Transverse colon (tissue), 4 donors: ENCODE measurements at regions of chr2 and their contacts with region 1.

Region 1: DNA sequence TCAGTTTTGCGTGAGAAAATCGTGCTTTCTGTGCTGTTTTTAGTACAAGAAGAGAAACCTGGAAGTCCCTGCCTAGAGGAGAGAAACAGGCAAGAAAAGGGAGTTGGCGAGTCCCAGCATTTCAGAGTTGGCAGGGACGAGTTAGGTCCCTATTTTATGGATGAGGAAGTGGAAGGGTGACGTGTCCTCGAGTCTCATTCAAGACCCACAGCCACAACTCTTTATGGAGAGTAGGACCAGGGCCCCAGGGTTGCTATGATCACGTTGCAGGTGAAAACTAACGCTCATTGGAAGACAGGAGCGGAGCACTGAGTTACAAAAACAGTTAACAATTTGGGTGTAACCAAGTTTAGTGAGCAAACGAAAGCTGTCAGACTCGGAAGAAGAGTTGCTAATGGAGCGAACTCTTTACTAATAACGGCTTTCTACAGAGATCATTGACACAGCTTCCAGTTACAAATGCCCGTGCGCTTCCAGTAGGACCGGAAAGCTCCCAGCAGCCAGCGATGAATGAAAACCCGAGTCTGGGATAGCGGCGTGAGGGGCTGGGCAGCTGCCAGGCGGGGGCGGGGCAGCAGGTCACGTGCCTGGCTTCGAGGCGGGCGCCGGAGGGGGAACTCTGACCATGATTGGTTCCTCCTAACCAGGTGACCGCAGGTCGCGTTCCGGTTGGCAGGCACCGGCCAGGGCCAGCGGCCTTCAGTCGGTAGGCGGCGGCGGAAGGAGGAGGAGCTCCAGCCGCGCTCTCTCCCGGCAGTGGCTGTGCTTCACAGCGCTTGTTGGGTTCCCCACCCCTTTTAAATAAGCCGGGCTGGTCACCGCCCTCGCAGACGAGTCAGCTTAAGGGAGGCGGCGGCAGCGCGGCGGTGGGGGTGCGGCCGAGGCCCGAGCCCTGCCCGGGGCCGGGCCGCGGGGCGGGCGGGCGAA is at the start of gene CCNYL1:
- DNase-seq: peak; percentile 99
- H3K4me3 ChIP-seq: peak within 1 kb of the TSS; percentile 78 to 91 (median 86)
- H3K27ac ChIP-seq: peak within 1 kb of the TSS; percentile 94 to 98 (median 97)
- H3K4me1 ChIP-seq: peaks cover 6 to 27% (median 13%) of the 10 kb centered on the region in 4 donors
- H3K27me3 ChIP-seq: no peaks in the 10 kb centered on the region
- CTCF ChIP-seq: peak in 4 of 5 experiments; percentile 22 to 65 (median 42)
- EP300 ChIP-seq: no peak
- POLR2A ChIP-seq: peak; percentile 76
- total RNA-seq, gene CCNYL1: 30.0 to 99.5 (median 31.7) TPM

Region 2: DNA sequence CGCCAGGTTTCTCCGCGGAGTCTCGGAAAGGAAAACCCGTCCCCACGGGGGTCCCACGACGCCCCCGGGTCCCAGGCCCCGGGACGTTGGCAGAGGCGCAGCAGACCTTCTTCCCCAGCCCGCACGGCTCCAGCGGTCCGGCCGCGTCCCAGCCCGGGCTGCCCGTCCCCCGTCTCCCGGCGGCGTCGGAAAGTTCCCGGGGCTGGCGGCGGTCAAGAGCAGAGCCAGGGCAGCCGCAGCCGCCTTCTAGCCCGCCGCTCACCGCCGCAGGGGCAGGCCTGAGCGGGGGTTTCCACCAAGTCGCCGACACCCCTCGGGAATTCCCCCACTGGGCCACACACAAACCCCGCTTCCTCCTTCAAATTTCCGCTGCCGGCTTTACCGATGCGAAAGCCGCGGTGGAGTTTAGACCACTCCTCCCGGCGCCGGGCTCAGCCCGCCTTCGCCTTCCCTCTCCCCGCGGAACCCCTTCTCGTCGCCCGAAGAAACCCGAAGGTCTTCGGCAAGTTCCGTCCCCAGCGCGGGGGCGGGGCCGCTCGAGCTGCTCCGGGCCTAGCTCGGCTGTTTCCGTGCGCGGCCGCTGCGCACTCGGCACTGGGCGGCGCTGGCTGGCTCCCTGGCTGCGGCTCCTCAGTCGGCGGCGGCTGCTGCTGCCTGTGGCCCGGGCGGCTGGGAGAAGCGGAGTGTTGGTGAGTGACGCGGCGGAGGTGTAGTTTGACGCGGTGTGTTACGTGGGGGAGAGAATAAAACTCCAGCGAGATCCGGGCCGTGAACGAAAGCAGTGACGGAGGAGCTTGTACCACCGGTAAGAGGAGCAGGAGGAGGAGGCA is 181.5 kb before region 1 on chr2 and contains the start of gene CREB1:
- in situ Hi-C with region 1: loop called in 1 of 4 experiments (anchors 25 kb)
- intact Hi-C with region 1: no loop called
- DNase-seq: peak; percentile 99
- H3K4me3 ChIP-seq: peak within 1 kb of the TSS; percentile 63 to 90 (median 83)
- H3K27ac ChIP-seq: peak within 1 kb of the TSS; percentile 97 to 99 (median 98)
- H3K4me1 ChIP-seq: peaks cover 24 to 50% (median 37%) of the 10 kb centered on the region in 4 donors
- H3K27me3 ChIP-seq: no peaks in the 10 kb centered on the region
- CTCF ChIP-seq: no peak
- EP300 ChIP-seq: peak; percentile 79
- POLR2A ChIP-seq: peak; percentile 99
- total RNA-seq, gene CREB1: 41.9 to 56.1 (median 51.9) TPM

Region 3: GRCh38 chr2:207584952-207585351 is 126.1 kb before region 1 on chr2:
- in situ Hi-C with region 1: no loop called
- intact Hi-C with region 1: no loop called
- DNase-seq: no peak
- H3K4me3 ChIP-seq: no peak overlapping the region
- H3K27ac ChIP-seq: no peak overlapping the region
- H3K4me1 ChIP-seq: no peaks in the 10 kb centered on the region
- H3K27me3 ChIP-seq: no peaks in the 10 kb centered on the region
- CTCF ChIP-seq: no peak
- EP300 ChIP-seq: no peak
- POLR2A ChIP-seq: no peak

Region 4: GRCh38 chr2:207635468-207636200 is 75.4 kb before region 1 on chr2:
- in situ Hi-C with region 1: no loop called
- intact Hi-C with region 1: no loop called
- DNase-seq: no peak
- H3K4me3 ChIP-seq: no peak overlapping the region
- H3K27ac ChIP-seq: no peak overlapping the region
- H3K4me1 ChIP-seq: no peaks in the 10 kb centered on the region
- H3K27me3 ChIP-seq: no peaks in the 10 kb centered on the region
- CTCF ChIP-seq: no peak
- EP300 ChIP-seq: no peak
- POLR2A ChIP-seq: no peak